ENCODE measurements at regions of chr5 and their contacts with region 1.

Region 1: GRCh38 chr5:38809388-38810359 is 36.1 kb upstream of the OSMR start:
- H3K4me3 Mint-ChIP-seq: no peak overlapping the region
- H3K27ac Mint-ChIP-seq: no peak overlapping the region
- H3K4me1 Mint-ChIP-seq: no peaks in the 10 kb centered on the region
- H3K27me3 Mint-ChIP-seq: peaks cover 53% of the 10 kb centered on the region

Region 2: GRCh38 chr5:38382898-38383297 is 426.8 kb before region 1 on chr5:
- intact Hi-C with region 1: loop called (anchors 5 kb)
- H3K4me3 Mint-ChIP-seq: no peak overlapping the region
- H3K27ac Mint-ChIP-seq: no peak overlapping the region
- H3K4me1 Mint-ChIP-seq: no peaks in the 10 kb centered on the region
- H3K27me3 Mint-ChIP-seq: peaks cover 30% of the 10 kb centered on the region

Region 3: GRCh38 chr5:38420691-38421390 is 388.8 kb before region 1 on chr5:
- intact Hi-C with region 1: loop called (anchors 1 kb)
- H3K4me3 Mint-ChIP-seq: no peak overlapping the region
- H3K27ac Mint-ChIP-seq: no peak overlapping the region
- H3K4me1 Mint-ChIP-seq: no peaks in the 10 kb centered on the region
- H3K27me3 Mint-ChIP-seq: peaks cover 58% of the 10 kb centered on the region

Measured in dendritic cell treated with granulocyte-macrophage colony-stimulating factor and Interleukin-4, amounts not matched to agents 40 ng/mL and 50 ng/mL, for 4 days (primary cell).